Activated B cell treated with CpG ODN at 0.5 μM for 24 hours (primary cell): ENCODE measurements at regions of chr7 and their contacts with region 1.

Region 1: DNA sequence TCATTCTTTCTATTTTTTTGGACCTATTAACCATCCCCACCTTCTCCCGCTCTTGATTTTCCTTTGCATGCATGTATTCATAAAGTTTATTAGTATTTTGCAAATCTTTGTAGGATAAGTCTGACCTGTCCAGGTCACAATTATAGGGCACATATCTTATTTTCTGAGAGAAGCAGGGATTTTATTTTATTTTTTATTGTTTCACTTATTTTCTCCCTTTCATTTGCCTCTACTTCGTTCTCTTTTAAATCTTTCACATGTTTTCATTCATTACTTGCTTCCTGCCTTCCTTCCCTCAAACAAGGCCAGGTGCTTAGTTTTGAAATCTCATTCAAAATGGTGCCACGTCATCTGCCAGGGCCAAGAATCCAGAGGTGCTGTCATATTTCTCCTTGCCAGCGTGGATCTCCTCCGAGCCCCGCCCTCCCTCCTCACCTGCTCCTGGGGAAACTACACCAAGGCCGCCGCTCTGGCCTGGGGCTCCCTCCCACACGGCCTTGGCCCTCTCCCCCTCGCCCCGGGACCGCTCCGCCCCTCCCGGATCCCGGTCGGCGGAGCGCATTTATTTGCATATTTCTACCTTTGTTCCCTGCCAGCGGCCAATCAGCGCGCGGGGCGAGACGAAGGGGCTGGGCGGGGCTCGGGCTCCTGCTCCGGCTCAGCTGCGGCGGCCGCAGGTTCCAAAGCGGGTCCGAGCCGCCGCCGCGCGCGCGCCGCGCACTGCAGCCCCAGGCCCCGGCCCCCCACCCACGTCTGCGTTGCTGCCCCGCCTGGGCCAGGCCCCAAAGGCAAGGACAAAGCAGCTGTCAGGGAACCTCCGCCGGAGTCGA is at the start of gene TSPAN13:
- DNase-seq: peak; percentile 80
- ATAC-seq: peak; percentile 88
- H3K4me3 Mint-ChIP-seq: peak within 1 kb of the TSS; percentile 88
- H3K27ac Mint-ChIP-seq: peak within 1 kb of the TSS; percentile 84
- H3K4me1 Mint-ChIP-seq: peaks cover 45% of the 10 kb centered on the region
- H3K27me3 Mint-ChIP-seq: no peaks in the 10 kb centered on the region
- CTCF ChIP-seq: no peak
- total RNA-seq, gene TSPAN13: 15.1 and 17.8 TPM in 2 replicates

Region 2: GRCh38 chr7:16765436-16765859 is 12.1 kb after region 1 on chr7:
- CTCF ChIA-PET with region 1: interaction called, 3 read pairs
- POLR2A ChIA-PET with region 1: interaction called, 5 read pairs
- intact Hi-C with region 1: loop called (anchors 1 kb)
- DNase-seq: no peak
- ATAC-seq: no peak
- H3K4me3 Mint-ChIP-seq: no peak overlapping the region
- H3K27ac Mint-ChIP-seq: peak overlapping the region; percentile 41
- H3K4me1 Mint-ChIP-seq: peaks cover 74% of the 10 kb centered on the region
- H3K27me3 Mint-ChIP-seq: no peaks in the 10 kb centered on the region
- CTCF ChIP-seq: no peak

Region 3: DNA sequence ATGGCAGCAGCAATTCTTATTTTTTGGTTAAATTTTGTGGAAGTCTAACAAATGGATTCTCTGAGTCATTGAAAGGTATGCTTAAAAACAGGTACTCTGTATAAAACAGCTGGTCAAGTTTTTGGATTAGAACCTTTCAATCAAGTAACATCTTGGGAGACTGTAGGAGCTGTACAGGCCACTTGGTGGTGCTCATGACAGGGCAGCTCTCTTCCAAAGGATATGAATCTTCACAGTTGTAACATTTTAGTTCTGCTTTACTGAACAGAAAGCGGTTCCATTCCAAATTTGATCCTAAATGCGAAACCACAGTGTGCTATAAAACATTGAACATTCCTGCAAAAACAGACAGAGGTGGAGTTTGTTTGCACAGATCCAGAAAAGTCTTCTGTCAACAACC is 173.0 kb after region 1 on chr7:
- CTCF ChIA-PET with region 1: interaction called, 3 read pairs
- POLR2A ChIA-PET with region 1: no interaction called
- intact Hi-C with region 1: loop called (anchors 5 kb)
- DNase-seq: no peak
- ATAC-seq: peak; percentile 45
- H3K4me3 Mint-ChIP-seq: no peak overlapping the region
- H3K27ac Mint-ChIP-seq: no peak overlapping the region
- H3K4me1 Mint-ChIP-seq: peaks cover 41% of the 10 kb centered on the region
- H3K27me3 Mint-ChIP-seq: peaks cover 11% of the 10 kb centered on the region
- CTCF ChIP-seq: no peak

Region 4: DNA sequence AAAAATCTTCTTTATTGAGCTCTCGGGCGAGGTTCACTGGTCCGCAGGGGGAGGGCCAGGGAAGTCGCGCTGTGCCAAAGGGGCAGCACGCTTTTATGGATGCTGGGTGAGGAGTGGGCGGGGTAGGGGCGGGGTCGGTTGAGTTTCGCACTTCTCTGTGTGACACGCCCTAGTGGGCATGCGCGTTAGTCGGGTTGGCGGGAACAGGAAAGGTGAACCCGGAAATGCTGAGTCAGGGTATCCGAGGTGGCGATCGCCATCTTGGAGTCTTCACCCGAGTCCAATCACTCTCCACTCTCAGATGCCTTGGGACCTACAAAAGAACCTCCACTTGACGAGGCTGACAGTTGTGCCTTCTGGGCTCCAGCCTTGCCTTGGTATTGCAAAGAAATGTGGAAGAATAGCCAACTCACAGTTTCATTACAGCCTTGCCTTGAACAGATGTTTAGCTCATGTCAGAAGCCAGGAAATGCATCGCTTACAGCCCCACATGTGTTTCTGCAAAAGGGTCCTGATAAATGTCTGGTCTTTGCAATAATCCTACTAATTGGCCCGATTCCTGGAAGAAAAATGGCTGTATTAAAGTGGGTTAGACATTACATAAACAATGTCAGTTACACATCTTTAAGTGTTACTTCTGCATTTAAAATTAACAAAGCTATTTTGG is 609.3 kb after region 1 on chr7:
- CTCF ChIA-PET with region 1: no interaction called
- POLR2A ChIA-PET with region 1: no interaction called
- intact Hi-C with region 1: no loop called
- DNase-seq: no peak
- ATAC-seq: no peak
- H3K4me3 Mint-ChIP-seq: no peak overlapping the region
- H3K27ac Mint-ChIP-seq: no peak overlapping the region
- H3K4me1 Mint-ChIP-seq: no peaks in the 10 kb centered on the region
- H3K27me3 Mint-ChIP-seq: no peaks in the 10 kb centered on the region
- CTCF ChIP-seq: no peak

Region 5: DNA sequence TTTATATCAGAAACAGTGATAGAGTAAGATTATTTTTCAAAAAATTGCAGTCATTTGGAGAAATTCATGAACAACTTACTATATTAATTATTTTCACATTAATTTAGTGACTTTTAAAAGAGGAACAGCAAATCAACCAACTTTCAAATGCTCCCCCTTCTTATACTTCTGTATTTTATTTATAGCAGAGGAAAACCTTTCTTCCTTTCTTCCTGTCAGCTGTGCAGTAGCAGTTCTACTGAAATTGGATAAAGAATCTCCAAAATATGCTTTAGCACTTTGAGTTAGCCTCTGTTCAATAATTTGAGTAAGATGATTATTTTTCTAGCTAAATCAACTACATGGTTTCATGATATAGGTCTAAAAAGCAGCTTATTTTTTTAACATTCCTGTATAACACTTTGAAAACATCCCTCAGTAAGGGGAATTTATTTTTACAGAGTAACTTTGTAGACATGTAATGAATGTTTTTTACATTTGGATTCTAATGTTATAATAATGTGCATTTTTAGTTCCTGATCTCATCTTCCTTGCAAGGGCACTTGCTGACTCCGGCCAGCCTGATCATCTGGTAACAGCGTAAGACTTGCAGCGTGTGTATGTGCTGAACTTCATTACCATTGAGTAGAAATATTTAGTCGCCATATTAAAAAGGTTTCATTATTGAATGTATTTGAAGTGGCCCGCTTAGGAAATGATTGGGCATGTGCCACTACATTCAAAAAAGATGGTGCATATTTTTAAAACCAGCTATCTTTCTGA is 1583.9 kb after region 1 on chr7:
- CTCF ChIA-PET with region 1: no interaction called
- POLR2A ChIA-PET with region 1: no interaction called
- intact Hi-C with region 1: loop called (anchors 10 kb)
- DNase-seq: no peak
- ATAC-seq: peak; percentile 51
- H3K4me3 Mint-ChIP-seq: peak overlapping the region; percentile 71
- H3K27ac Mint-ChIP-seq: peak overlapping the region; percentile 78
- H3K4me1 Mint-ChIP-seq: peaks cover 72% of the 10 kb centered on the region
- H3K27me3 Mint-ChIP-seq: no peaks in the 10 kb centered on the region
- CTCF ChIP-seq: no peak